Dendritic cell treated with granulocyte-macrophage colony-stimulating factor and Interleukin-4, amounts not matched to agents 40 ng/mL and 50 ng/mL, for 4 days (primary cell): ENCODE measurements at regions of chr5 and their contacts with region 1.

Region 1: DNA sequence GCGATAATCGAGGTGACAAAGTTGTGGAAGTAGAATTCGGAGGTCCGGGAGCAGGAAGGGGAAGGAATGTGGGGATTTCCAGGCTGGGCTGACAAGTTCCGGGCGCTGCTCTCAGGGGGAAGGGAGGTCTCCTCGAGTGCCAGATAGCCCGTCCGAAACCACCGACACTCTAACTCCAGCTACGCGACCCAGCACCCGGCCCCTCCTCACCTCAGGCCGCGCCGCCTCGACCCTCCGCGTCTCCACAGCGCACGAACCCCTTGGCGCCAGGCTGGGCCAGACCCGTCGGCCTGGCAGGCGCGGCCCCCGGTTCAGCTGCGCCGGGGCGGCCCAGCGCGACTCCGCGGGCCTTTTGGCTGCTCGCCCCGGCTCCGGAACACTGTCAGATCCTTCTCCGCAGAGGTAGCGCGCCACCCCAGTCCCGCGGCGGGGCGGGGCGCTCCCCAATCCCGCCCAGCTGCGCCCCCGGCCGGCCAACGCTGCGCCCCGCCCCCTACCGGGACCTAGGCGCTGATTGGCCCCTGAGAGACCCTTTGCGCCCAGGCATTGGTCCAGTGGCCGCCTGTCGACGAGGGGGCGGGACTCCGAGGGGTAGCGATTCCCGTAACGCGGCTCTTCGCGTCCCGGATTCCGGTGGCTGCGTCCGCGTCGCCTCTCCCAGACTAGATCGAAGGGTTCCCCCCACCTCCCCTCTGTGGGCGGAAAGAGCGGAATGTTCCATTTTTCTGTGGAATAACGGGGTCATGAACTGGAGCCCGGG is at the start of gene IL6ST:
- H3K4me3 Mint-ChIP-seq: peak within 1 kb of the TSS; percentile 89
- H3K27ac Mint-ChIP-seq: peak within 1 kb of the TSS; percentile 95
- H3K4me1 Mint-ChIP-seq: peaks cover 47% of the 10 kb centered on the region
- H3K27me3 Mint-ChIP-seq: no peaks in the 10 kb centered on the region

Region 2: GRCh38 chr5:56026863-56027300 is 32.1 kb after region 1 on chr5:
- intact Hi-C with region 1: loop called (anchors 5 kb)
- H3K4me3 Mint-ChIP-seq: no peak overlapping the region
- H3K27ac Mint-ChIP-seq: peak overlapping the region; percentile 22
- H3K4me1 Mint-ChIP-seq: peaks cover 15% of the 10 kb centered on the region
- H3K27me3 Mint-ChIP-seq: no peaks in the 10 kb centered on the region

Region 3: DNA sequence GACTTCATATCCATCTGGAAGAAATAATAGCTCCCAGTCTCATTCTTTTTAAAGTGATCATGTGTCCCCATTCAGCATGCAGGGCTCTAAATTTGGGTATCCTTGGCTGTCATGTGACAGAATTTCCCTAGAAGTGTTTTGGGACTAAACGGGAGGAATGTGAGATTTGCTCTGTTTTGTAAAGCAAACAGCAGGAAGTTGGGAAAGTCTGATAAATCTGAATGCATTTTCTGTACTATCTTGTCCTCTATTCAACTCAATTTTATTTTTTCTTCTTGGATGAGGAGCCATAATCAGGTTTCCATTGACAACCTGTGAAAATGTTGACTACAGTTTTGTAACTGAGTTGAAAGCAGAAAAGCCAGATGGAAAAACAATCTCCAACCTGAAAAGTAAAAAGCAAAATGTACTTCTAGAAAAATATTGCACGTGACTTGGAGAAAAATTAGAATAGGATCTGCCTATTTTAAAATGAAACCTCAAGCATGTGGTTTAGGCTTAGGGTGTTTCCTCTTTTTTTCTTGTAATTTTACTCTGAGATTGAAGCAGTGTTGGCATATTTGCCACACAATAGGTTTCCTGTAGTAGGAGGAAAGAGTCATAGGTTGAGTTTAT is 76.2 kb after region 1 on chr5:
- intact Hi-C with region 1: loop called (anchors 5 kb)
- H3K4me3 Mint-ChIP-seq: peak overlapping the region; percentile 32
- H3K27ac Mint-ChIP-seq: peak overlapping the region; percentile 84
- H3K4me1 Mint-ChIP-seq: peaks cover 59% of the 10 kb centered on the region
- H3K27me3 Mint-ChIP-seq: peaks cover 9% of the 10 kb centered on the region

Region 4: DNA sequence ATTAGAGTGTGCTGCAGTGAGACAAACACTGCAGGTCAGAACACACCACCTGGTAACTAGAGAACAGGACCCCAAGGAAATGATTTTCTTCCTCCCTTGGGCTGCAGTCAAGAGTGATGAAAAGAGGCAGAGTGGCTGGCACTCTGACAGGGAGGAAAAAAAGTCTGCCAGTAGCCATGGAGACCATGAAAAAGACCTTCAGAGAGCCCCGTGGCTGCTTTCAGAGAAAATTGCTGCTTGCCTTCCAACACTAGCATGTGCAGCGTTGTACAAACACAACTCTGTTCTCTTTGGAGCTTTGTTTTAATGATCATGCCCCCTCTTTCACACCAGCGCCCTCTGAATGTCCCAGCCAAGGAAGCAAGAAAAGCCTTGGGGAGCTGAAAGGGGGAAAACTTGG is 169.6 kb after region 1 on chr5:
- intact Hi-C with region 1: loop called (anchors 10 kb)
- H3K4me3 Mint-ChIP-seq: no peak overlapping the region
- H3K27ac Mint-ChIP-seq: no peak overlapping the region
- H3K4me1 Mint-ChIP-seq: peaks cover 65% of the 10 kb centered on the region
- H3K27me3 Mint-ChIP-seq: no peaks in the 10 kb centered on the region

Region 5: DNA sequence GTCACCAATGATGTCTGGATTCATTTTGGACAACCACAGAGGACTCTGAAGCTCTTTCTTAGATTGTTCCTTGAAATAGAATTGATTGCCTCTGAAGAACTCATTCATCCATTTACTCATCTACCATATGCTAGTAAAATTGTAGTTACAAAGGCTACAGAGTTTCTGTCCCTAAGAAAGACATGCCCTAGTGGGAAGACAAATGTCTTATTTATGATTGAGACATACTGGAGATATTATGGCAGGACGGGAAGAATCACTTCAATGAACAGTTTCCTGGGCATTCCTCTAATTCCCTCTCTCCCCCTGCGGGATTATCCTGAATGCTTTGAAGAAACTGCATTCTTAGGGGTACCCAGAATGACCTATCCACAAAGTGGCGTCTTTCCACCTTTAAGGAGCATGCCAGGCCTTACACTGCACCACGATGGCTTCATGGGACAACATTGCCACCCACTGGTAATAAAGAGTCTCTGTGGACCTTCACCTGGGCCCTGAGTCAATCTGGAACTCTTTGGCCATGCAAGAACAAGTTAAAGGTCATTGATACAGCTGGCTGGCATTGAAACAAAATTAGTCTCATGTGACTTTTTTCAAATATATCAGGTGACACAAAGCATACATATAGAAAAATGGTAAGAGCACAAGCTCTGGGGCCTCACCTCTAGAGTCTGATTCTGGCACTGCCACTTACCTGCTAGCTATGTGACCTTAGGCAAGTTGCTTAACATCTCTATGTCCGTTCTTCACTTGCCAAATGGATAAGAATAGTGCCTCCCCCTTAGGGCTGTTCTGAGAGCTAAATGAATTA is 206.3 kb after region 1 on chr5:
- intact Hi-C with region 1: loop called (anchors 5 kb)
- H3K4me3 Mint-ChIP-seq: no peak overlapping the region
- H3K27ac Mint-ChIP-seq: no peak overlapping the region
- H3K4me1 Mint-ChIP-seq: peaks cover 21% of the 10 kb centered on the region
- H3K27me3 Mint-ChIP-seq: no peaks in the 10 kb centered on the region